Spleen (tissue), 13 donors: ENCODE measurements at regions of chr1 and their contacts with region 1.

Region 1: GRCh38 chr1:50368179-50369012 is 54.8 kb downstream of the DMRTA2 start:
- DNase-seq: no peak
- H3K4me3 ChIP-seq: no peak overlapping the region
- H3K27ac ChIP-seq: no peak overlapping the region
- H3K4me1 ChIP-seq: peaks cover 0 to 9% (median 5%) of the 10 kb centered on the region in 6 donors
- H3K27me3 ChIP-seq: peaks cover 0 to 80% (median 12%) of the 10 kb centered on the region in 7 donors
- CTCF ChIP-seq: peak; percentile 35 to 78 (median 66)
- POLR2A ChIP-seq: no peak

Region 2: GRCh38 chr1:50329332-50329932 is 39.0 kb before region 1 on chr1:
- intact Hi-C with region 1: no loop called
- DNase-seq: no peak
- H3K4me3 ChIP-seq: no peak overlapping the region
- H3K27ac ChIP-seq: no peak overlapping the region
- H3K4me1 ChIP-seq: peaks cover 0 to 18% (median 14%) of the 10 kb centered on the region in 6 donors
- H3K27me3 ChIP-seq: peaks cover 0 to 61% (median 19%) of the 10 kb centered on the region in 7 donors
- CTCF ChIP-seq: no peak
- POLR2A ChIP-seq: no peak

Region 3: DNA sequence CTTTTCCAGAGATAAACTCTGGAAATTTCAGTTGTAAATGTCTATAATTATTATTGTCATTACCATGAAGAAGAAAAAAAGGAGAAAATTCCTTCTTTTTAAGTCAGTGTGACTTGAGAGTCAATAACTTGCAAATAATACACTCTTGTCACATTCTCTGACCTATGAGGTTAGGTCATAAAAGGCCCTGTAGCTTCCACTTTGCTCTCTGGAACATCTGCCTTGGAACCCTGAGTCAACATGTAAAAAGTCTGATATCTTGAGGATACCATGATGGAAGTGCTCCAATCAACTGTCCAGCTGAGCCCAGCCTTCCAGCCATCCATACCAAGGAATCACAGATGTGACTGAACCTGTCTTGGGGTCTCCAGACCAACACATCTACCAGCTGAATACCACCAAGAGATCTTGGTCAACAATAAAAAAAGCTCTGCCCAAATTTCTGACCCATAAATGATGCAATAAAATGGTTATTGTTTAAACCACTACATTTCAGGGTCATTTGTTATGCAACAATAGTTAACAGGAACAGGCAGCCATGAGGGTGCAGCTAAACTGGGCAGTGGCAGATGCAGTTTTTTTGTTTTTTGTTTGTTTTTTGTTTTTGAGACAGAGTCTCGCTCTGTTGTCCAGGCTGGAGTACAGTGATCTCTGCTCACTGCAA is 44.5 kb after region 1 on chr1:
- intact Hi-C with region 1: no loop called
- DNase-seq: no peak
- H3K4me3 ChIP-seq: no peak overlapping the region
- H3K27ac ChIP-seq: no peak overlapping the region
- H3K4me1 ChIP-seq: peaks cover 0 to 28% (median 14%) of the 10 kb centered on the region in 6 donors
- H3K27me3 ChIP-seq: peaks cover 5 to 75% (median 39%) of the 10 kb centered on the region in 7 donors
- CTCF ChIP-seq: no peak
- POLR2A ChIP-seq: no peak

Region 4: DNA sequence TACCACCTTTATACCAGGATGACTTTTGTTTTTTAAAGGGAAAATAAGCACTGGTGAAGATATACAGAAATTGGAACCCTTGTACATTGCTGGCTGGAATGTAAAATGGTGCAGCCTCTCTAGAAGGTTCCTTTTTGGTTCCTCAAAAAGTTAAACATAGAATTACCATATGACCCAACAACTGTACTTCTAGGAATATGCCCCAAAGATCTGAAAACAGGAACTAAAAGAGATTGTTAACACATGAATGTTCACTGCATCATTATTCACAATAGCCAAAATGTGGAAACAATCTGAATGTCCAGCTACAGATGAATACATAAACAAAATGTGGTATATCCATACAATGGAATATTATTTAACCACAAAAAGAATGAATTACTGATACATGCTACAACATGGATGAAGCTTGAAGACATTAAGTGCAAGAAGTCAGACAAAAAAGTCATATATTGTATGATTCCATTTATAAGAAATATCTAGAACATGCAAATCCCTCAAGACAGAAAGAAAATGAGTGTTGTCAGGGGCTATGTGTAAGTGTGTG is 139.7 kb after region 1 on chr1:
- intact Hi-C with region 1: no loop called
- DNase-seq: no peak
- H3K4me3 ChIP-seq: no peak overlapping the region
- H3K27ac ChIP-seq: no peak overlapping the region
- H3K4me1 ChIP-seq: no peaks in the 10 kb centered on the region
- H3K27me3 ChIP-seq: no peaks in the 10 kb centered on the region
- CTCF ChIP-seq: no peak
- POLR2A ChIP-seq: no peak

Region 5: DNA sequence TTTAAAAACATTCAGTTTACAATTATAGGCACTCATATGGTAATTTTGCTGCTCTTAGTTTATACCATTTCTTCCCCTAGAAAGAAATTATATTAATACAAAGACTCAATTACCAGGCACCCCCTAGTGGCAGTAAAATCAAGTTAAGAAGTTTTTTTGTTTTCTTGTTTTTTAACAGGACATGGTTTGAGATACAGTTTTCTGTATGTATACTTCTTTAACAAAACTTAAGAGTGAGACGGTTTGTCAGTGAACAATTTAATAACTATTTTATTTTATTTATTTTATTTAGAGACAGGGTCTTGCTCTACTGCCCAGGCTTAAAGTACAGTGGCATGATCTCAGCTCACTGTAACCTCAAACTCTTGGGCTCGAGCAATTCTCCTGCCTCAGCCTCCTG is 367.0 kb after region 1 on chr1:
- intact Hi-C with region 1: loop called (anchors 10 kb)
- DNase-seq: no peak
- H3K4me3 ChIP-seq: no peak overlapping the region
- H3K27ac ChIP-seq: no peak overlapping the region
- H3K4me1 ChIP-seq: peaks cover 0 to 26% (median 5%) of the 10 kb centered on the region in 6 donors
- H3K27me3 ChIP-seq: no peaks in the 10 kb centered on the region
- CTCF ChIP-seq: peak in 7 of 11 experiments; percentile 14 to 48 (median 37)
- POLR2A ChIP-seq: no peak